Activated CD4-positive, alpha-beta memory T cell treated with anti-CD3 and anti-CD28 coated beads for 36 hours (primary cell): ENCODE measurements at regions of chrX and their contacts with region 1.

Region 1: DNA sequence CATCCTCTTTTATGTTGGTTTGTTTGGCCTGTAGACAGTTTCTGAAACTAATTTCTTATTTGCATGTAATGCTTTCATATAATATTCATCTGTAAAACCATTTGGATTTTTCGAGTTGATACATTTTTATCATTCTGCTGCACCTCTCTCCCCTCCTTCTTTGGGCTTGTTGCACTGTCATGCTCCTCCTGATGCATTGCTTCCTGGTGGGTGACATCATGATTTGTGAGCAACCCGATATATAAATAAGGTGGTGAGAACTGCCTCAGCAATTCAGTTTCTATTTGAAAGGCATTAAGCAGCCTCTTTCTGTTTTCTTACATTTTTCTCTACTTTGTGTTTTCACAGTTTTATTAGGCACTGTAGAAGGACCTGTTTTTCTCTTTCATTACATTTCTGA is 515.7 kb downstream of the RPA4 start:
- DNase-seq: peak; percentile 33
- H3K4me3 Mint-ChIP-seq: no peak overlapping the region
- H3K27ac Mint-ChIP-seq: peak overlapping the region; percentile 85
- H3K4me1 Mint-ChIP-seq: peaks cover 49% of the 10 kb centered on the region
- H3K27me3 Mint-ChIP-seq: no peaks in the 10 kb centered on the region

Region 2: GRCh38 chrX:96684339-96685209 is 714.8 kb before region 1 on chrX and contains the start of gene DIAPH2:
- CTCF ChIA-PET with region 1: no interaction called
- POLR2A ChIA-PET with region 1: no interaction called
- intact Hi-C with region 1: loop called (anchors 5 kb)
- DNase-seq: peak; percentile 85
- H3K4me3 Mint-ChIP-seq: peak within 1 kb of the TSS; percentile 90
- H3K27ac Mint-ChIP-seq: peak within 1 kb of the TSS; percentile 93
- H3K4me1 Mint-ChIP-seq: peaks cover 24% of the 10 kb centered on the region
- H3K27me3 Mint-ChIP-seq: no peaks in the 10 kb centered on the region
- total RNA-seq, gene DIAPH2: 10.0 to 10.6 TPM

Region 3: DNA sequence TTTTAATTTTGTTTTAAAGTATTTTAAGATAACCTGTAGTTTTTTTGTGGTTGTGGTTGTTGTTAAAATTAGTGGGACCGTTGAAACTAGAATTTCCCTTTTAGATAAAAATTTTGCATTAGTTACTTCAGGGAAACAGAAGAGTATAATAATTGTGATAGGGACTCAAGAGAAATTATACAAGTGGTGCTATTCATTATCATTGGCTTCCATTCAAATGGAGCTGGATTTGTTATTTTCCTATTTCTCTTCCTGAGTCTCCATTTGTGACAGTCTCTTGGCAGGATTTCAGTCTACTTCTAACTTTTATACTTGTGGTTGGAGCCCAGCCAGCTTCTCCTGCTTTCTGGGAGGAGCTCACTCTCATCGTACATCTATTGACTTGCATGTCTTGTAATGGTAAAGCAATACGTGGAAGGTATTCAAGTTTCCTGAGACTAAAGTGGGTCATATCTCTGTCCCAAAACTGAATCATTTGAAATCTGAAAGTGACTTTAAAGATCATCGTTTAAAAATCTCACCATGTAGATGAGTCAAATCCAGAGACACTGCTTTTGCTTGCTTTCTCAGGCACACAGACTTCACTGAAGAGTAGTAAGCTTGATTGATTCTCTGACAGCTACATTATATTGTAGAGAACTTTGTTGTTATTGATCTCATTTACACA is 359.9 kb before region 1 on chrX:
- CTCF ChIA-PET with region 1: no interaction called
- POLR2A ChIA-PET with region 1: no interaction called
- intact Hi-C with region 1: loop called (anchors 2 kb)
- DNase-seq: peak; percentile 15
- H3K4me3 Mint-ChIP-seq: no peak overlapping the region
- H3K27ac Mint-ChIP-seq: peak overlapping the region; percentile 51
- H3K4me1 Mint-ChIP-seq: peaks cover 11% of the 10 kb centered on the region
- H3K27me3 Mint-ChIP-seq: no peaks in the 10 kb centered on the region

Region 4: GRCh38 chrX:97211070-97211469 is 188.3 kb before region 1 on chrX:
- CTCF ChIA-PET with region 1: no interaction called
- POLR2A ChIA-PET with region 1: no interaction called
- intact Hi-C with region 1: loop called (anchors 2 kb)
- DNase-seq: no peak
- H3K4me3 Mint-ChIP-seq: no peak overlapping the region
- H3K27ac Mint-ChIP-seq: peak overlapping the region; percentile 28
- H3K4me1 Mint-ChIP-seq: peaks cover 10% of the 10 kb centered on the region
- H3K27me3 Mint-ChIP-seq: no peaks in the 10 kb centered on the region

Region 5: DNA sequence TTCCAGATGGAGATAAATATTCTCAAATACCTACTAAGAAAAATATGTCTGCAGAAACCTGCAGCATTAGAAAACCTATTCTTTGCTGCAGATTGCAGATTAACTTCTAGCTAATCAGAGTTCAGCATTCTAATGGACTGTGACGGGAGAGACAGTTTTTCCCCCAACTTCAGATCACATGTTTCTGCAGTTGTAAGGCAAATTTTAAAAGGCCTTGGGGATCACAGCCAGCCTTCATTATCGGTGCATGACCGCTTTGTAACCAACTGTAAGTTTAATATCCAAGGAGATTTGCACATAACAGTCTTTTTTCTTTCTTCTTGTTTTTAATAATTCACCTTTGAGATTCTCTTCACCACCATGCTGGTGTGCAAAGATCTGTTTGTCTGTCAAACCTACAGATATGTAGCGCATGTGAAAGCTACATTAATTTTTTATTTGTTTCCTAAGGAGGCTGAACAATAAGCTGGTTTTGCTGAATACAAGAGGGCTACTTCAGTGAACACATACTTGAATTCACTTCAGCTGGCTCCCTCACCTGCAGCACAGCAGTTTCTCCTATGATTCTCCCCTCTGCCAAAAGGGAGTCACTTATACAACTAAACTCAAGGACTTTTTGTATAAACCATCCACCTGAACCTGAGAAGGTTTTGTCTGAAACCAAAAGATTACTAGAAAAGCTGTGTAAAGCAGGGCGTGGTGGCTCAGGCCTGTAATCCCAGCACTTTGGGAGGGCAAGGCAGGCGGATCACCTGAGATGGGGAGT is 27.2 kb before region 1 on chrX:
- CTCF ChIA-PET with region 1: no interaction called
- POLR2A ChIA-PET with region 1: no interaction called
- intact Hi-C with region 1: no loop called
- DNase-seq: no peak
- H3K4me3 Mint-ChIP-seq: no peak overlapping the region
- H3K27ac Mint-ChIP-seq: no peak overlapping the region
- H3K4me1 Mint-ChIP-seq: no peaks in the 10 kb centered on the region
- H3K27me3 Mint-ChIP-seq: no peaks in the 10 kb centered on the region

Region 6: GRCh38 chrX:97446298-97446882 is 47.0 kb after region 1 on chrX:
- CTCF ChIA-PET with region 1: no interaction called
- POLR2A ChIA-PET with region 1: no interaction called
- intact Hi-C with region 1: no loop called
- DNase-seq: no peak
- H3K4me3 Mint-ChIP-seq: no peak overlapping the region
- H3K27ac Mint-ChIP-seq: no peak overlapping the region
- H3K4me1 Mint-ChIP-seq: no peaks in the 10 kb centered on the region
- H3K27me3 Mint-ChIP-seq: no peaks in the 10 kb centered on the region

Region 7: GRCh38 chrX:97494756-97495372 is 95.5 kb after region 1 on chrX:
- CTCF ChIA-PET with region 1: no interaction called
- POLR2A ChIA-PET with region 1: no interaction called
- intact Hi-C with region 1: loop called (anchors 10 kb)
- DNase-seq: no peak
- H3K4me3 Mint-ChIP-seq: no peak overlapping the region
- H3K27ac Mint-ChIP-seq: no peak overlapping the region
- H3K4me1 Mint-ChIP-seq: no peaks in the 10 kb centered on the region
- H3K27me3 Mint-ChIP-seq: no peaks in the 10 kb centered on the region

Region 8: DNA sequence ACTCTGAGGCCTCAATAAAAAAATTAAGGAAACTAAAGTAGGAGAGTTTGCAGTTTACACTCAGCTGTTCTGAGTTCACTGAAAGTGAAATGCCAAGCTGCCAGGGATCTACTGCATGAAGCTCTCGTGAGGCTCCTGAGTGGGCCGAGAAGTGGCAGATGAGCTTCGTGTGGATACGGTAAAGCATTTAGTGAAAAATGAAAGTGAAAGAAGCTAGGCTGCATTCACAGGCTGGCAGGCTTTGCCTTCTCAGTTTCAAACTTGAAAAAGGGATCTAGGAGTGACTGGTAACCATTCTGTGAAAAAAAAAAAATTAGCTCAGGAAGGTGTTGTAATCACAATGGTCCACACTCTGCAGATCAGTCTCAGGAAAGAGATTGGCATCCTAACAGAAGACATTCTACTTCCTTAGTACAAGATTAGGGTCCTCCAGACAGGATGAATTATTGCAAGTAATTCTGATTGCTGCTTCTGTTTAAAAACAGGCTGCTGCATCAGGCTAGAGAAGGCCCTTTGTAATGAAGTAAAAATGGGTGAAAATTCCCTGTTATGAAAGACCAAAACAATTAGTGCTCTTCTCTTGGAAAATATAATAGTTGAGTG is 164.2 kb after region 1 on chrX:
- CTCF ChIA-PET with region 1: no interaction called
- POLR2A ChIA-PET with region 1: no interaction called
- intact Hi-C with region 1: loop called (anchors 1 kb)
- DNase-seq: peak; percentile 59
- H3K4me3 Mint-ChIP-seq: peak overlapping the region; percentile 59
- H3K27ac Mint-ChIP-seq: peak overlapping the region; percentile 54
- H3K4me1 Mint-ChIP-seq: peaks cover 10% of the 10 kb centered on the region
- H3K27me3 Mint-ChIP-seq: no peaks in the 10 kb centered on the region

Region 9: GRCh38 chrX:97597954-97598353 is 198.6 kb after region 1 on chrX:
- CTCF ChIA-PET with region 1: no interaction called
- POLR2A ChIA-PET with region 1: no interaction called
- intact Hi-C with region 1: loop called (anchors 5 kb)
- DNase-seq: peak; percentile 49
- H3K4me3 Mint-ChIP-seq: no peak overlapping the region
- H3K27ac Mint-ChIP-seq: peak overlapping the region; percentile 81
- H3K4me1 Mint-ChIP-seq: peaks cover 7% of the 10 kb centered on the region
- H3K27me3 Mint-ChIP-seq: no peaks in the 10 kb centered on the region